Calu3 (cell line): ENCODE measurements at regions of chr9 and their contacts with region 1.

Region 1: GRCh38 chr9:121213136-121213806 is 11.6 kb upstream of the RAB14 start:
- DNase-seq: peak; percentile 89
- H3K4me3 Mint-ChIP-seq: no peak overlapping the region
- H3K27ac Mint-ChIP-seq: no peak overlapping the region
- H3K4me1 Mint-ChIP-seq: no peaks in the 10 kb centered on the region
- H3K27me3 Mint-ChIP-seq: no peaks in the 10 kb centered on the region
- CTCF ChIP-seq: peak; percentile 72

Region 2: DNA sequence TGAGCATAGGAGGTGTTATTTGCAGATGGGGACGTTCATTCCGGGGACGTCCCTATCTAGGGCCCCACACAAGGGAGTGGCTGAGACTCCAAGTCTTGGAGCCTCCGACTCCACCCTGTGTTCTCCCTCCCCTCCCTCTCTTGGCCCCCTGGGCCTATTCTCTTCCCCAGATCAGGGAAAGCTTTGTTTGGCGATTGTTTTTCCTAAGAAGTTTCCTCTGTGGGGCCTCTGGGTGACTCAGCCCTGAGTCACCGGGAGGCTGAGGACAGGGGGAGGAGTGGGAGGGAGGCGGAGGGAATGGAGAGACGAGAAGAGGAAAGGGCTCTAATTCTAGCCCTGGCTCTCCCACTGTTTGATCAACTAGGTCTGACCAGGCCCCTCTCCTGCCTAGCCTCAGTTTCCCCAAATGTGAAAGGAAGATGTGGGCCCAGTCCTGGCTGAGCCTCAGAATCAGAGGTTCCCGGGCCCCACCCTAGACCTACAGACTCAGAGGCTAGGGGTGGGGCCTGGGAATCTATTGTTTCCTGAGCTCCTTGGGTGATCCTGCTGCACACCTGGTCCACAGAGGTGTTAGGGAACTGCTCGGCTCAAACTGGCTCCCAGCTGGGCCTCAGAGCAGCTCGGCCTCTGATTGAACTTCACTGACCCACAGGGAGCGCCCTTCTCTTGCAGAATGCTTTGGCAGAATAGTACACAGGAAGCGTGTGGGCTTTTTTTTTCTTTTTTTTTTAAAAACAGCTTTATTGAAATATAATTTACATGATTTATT is 73.9 kb after region 1 on chr9:
- CTCF ChIA-PET with region 1: interaction called, 3 read pairs
- intact Hi-C with region 1: loop called (anchors 5 kb)
- DNase-seq: peak; percentile 79
- H3K4me3 Mint-ChIP-seq: peak overlapping the region; percentile 52
- H3K27ac Mint-ChIP-seq: peak overlapping the region; percentile 99
- H3K4me1 Mint-ChIP-seq: peaks cover 62% of the 10 kb centered on the region
- H3K27me3 Mint-ChIP-seq: no peaks in the 10 kb centered on the region
- CTCF ChIP-seq: no peak

Region 3: DNA sequence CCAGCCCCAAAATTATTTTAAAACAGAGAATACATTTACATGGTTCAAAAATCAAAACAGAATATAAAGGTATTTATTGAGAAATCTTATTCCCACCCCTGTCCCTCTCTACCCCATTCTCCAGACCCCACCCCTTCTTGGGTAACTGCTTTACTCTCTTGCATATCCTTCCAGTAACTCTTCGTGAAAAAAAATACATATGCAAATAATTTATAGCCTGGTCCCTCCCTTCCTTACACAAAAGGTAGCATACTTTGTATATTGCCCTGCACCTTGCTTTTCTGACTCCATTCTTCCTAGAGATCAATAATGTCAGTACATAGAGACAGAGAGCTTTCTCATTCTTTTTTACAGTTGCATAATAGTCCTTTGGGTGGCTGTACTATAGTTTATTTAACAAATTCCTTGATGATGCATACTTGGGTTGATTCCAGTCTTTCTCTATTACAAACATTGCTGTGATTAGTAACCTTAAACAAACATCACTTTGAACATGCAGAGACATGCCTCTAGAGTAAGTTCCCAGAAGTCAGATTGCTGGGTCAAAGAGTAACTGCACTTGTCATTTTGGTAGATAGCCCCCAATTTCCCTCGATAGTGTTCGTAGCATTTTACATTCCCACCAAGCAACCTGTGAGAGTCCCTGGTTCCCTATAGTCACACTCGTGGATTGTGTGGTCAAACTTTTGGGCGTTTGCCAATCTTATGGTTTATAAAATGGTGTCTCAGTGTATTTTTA is 108.9 kb after region 1 on chr9:
- CTCF ChIA-PET with region 1: no interaction called
- intact Hi-C with region 1: loop called (anchors 5 kb)
- DNase-seq: no peak
- H3K4me3 Mint-ChIP-seq: no peak overlapping the region
- H3K27ac Mint-ChIP-seq: peak overlapping the region; percentile 78
- H3K4me1 Mint-ChIP-seq: peaks cover 21% of the 10 kb centered on the region
- H3K27me3 Mint-ChIP-seq: no peaks in the 10 kb centered on the region
- CTCF ChIP-seq: no peak

Region 4: GRCh38 chr9:121376214-121376830 is 163.1 kb after region 1 on chr9:
- CTCF ChIA-PET with region 1: interaction called, 5 read pairs
- intact Hi-C with region 1: loop called (anchors 1 kb)
- DNase-seq: no peak
- H3K4me3 Mint-ChIP-seq: no peak overlapping the region
- H3K27ac Mint-ChIP-seq: no peak overlapping the region
- H3K4me1 Mint-ChIP-seq: peaks cover 21% of the 10 kb centered on the region
- H3K27me3 Mint-ChIP-seq: no peaks in the 10 kb centered on the region
- CTCF ChIP-seq: peak; percentile 12

Region 5: GRCh38 chr9:121399883-121400607 is 186.8 kb after region 1 on chr9:
- CTCF ChIA-PET with region 1: no interaction called
- intact Hi-C with region 1: loop called (anchors 1 kb)
- DNase-seq: peak; percentile 5
- H3K4me3 Mint-ChIP-seq: no peak overlapping the region
- H3K27ac Mint-ChIP-seq: no peak overlapping the region
- H3K4me1 Mint-ChIP-seq: no peaks in the 10 kb centered on the region
- H3K27me3 Mint-ChIP-seq: no peaks in the 10 kb centered on the region
- CTCF ChIP-seq: peak; percentile 42